ENCODE measurements at regions of chr1 and their contacts with region 1.

Region 1: DNA sequence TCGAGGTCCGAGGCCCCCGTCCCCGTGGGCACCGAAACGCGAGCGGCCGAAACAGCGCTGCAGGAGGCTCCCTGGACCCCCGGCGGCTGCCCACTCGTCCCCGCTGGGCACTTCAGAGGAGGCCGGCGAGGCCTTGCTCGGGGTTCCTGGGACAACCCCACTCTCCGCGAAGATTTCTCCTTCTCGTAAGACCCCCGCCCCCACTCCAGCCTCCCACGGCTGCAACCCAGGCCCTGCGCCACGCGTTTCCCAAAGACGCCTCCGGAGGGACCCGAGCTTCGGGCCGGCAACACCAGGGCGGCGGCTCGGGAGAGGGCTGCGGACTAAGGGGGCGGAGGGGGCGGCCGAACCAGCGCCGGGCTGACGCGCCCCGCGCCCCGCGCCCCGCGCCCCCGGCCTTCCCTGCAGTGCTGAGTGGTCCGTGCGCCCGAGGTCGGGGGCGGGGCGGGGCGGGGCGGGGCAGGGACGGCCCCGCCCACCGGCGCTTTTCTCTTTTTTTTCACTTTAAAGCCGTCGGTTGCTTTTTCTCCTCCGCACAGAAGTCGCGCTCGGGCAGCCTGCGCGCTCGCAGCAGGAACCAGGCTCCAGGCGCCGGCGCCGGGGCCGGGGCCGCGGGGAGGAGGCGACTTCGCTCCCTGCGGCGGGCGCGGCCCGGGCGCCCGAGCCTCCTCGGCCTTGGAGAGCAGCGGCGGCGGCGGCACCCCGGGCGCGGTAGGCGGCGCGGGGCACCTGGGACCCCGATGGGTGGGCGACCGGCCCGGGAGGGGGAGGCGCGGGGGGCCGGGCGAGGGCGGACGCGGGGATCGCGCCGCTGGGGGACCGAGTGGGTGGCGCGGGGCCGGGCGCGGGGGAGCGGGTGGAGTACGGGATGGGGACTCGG is at the start of gene SPSB1:
- DNase-seq: peak; percentile 81
- CTCF ChIP-seq: no peak

Region 2: DNA sequence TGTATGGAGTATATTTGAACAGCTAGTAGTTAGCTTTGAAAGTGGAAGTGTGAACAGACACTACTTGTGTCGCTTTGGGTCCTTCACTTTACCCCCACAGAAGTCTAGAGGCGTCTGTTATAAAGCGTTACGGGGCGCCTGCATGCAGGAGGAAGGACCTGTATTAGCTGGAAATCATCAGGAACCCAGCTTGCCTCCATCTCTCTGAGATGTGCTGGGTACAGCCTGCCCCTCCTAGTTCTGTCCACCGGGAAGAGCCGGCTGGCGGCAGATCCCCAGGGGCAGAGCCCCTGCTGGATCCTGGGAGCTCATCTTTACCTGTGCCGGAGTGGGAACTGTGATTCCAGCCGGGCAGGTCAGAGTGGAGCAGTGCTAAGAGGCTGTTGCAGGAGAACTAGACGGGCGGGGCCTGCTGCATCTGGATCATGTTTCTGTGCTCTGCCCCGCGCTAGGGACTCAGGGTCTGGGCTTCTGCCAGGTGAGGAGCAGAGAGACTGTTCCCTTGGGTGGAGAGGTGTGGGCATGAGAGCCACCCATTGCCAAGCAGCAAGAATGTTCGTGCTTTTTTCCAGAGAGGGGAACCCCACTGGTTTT is 22.2 kb before region 1 on chr1:
- CTCF ChIA-PET with region 1: interaction called, 11 read pairs
- POLR2A ChIA-PET with region 1: interaction called, 3 read pairs
- DNase-seq: no peak
- CTCF ChIP-seq: no peak

Region 3: DNA sequence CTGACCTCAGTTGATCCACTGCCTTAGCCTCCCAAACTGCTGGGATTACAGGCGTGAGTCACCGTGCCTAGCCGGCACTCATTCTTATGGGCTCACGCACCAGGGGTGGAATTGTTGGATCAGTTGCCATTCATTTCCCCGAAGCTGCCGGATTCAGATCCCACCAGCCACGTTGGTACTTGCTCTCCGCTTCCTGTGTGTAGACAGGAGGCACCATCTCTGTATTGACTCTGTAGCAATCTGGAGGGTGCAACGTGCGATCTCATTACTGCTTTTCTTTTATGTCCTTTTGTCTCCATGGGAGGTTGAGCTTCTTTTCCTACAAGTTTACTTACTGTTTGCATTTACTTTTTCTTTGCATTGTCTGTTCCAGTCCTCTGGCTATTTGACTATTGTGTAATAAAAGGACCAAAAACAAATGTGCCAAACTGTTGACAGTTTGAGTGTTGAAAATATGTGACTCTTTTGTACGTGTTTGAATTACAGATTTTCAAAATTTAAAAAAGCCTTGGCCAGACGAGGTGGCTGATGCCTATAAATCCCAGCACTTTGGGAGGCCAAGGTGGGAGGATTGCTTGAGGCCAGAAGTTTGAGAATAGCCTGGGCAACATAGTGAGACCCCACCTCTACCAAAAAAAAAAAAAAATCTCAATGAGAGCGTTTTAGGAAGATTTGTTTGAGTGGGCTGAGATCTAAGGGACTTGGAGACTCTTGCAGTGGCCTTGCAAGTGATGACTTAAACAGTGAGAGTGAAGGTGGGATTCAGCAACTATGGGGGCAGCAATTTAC is 39.2 kb after region 1 on chr1:
- CTCF ChIA-PET with region 1: no interaction called
- POLR2A ChIA-PET with region 1: no interaction called
- DNase-seq: no peak
- CTCF ChIP-seq: no peak

Region 4: GRCh38 chr1:9449106-9449627 is 156.6 kb after region 1 on chr1:
- CTCF ChIA-PET with region 1: interaction called, 84 read pairs
- POLR2A ChIA-PET with region 1: no interaction called
- DNase-seq: no peak
- CTCF ChIP-seq: no peak

Measured in GM10248 (cell line).